ENCODE measurements at regions of chr12 and their contacts with region 1.

Region 1: GRCh38 chr12:27014085-27014858 is at the start of gene TM7SF3:
- DNase-seq: peak; percentile 97 to 98 (median 98)
- ATAC-seq: peak; percentile 87 to 96 (median 92)
- H3K4me3 ChIP-seq: peak within 1 kb of the TSS; percentile 71 to 81 (median 74)
- H3K27ac ChIP-seq: peak within 1 kb of the TSS; percentile 91 to 94 (median 93)
- H3K4me1 ChIP-seq: peaks cover 0 to 29% (median 9%) of the 10 kb centered on the region in 4 donors
- H3K27me3 ChIP-seq: no peaks in the 10 kb centered on the region
- CTCF ChIP-seq: peak; percentile 96 to 100 (median 98)
- POLR2A ChIP-seq: peak; percentile 83
- total RNA-seq, gene TM7SF3: 38.4 to 75.1 (median 62.8) TPM

Region 2: GRCh38 chr12:26810330-26810729 is 203.9 kb before region 1 on chr12:
- intact Hi-C with region 1: no loop called
- DNase-seq: peak in 1 of 3 donors; percentile 28
- ATAC-seq: peak; percentile 59 to 65 (median 62)
- H3K4me3 ChIP-seq: no peak overlapping the region
- H3K27ac ChIP-seq: no peak overlapping the region
- H3K4me1 ChIP-seq: peaks cover 0 to 18% (median under 1%) of the 10 kb centered on the region in 4 donors
- H3K27me3 ChIP-seq: no peaks in the 10 kb centered on the region
- CTCF ChIP-seq: no peak
- POLR2A ChIP-seq: no peak

Region 3: DNA sequence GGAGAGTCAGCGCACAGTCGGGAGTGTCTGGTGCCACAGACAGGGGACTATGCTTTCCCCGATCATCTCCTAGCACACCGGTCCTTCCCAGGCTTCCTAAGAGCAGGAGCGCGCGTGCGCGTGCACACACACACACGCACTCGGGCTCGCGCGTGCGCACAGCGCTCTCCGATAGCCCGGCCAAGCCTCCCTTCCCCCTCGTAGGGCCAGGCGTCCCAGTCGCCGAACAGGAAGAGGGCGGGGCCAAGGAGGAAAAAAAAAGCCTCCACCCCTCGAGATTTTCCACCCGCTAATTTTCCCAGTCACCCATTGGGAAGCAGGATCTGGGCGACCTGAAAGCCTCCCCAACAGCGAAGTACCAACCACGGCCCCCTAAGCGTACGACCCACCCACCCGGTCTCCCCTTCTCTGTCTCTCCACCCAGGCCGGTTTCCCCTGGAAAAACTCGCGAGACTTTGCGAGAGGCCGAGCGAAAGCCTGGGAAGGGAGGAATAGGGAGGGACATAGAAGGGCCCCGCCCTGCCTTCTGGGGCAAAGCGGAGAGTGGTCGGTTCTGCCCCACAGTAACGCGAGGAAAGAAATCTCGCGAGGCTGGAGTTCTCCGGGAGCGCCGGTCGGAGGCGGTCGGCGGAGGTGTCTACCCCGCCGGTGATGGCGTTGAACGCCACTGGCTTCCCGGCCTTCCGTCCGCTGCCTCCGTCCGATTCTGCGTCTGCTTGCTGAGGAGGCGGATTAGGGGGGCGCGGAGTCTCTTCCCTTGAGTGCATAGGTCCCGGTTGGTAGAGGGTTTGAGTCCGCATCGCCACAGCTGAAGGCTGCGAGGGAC is 76.2 kb before region 1 on chr12 and contains the starts of genes FGFR1OP2 and INTS13:
- intact Hi-C with region 1: loop called in 1 of 2 experiments (anchors 10 kb)
- DNase-seq: peak; percentile 99
- ATAC-seq: peak; percentile 94 to 98 (median 95)
- H3K4me3 ChIP-seq: peak within 1 kb of the TSS; percentile 87 to 94 (median 90)
- H3K27ac ChIP-seq: peak within 1 kb of the TSS; percentile 92 to 96 (median 93)
- H3K4me1 ChIP-seq: peaks cover 0 to 39% (median 9%) of the 10 kb centered on the region in 4 donors
- H3K27me3 ChIP-seq: no peaks in the 10 kb centered on the region
- CTCF ChIP-seq: peak in 1 of 4 donors; percentile 5
- POLR2A ChIP-seq: peak; percentile 97
- total RNA-seq, gene FGFR1OP2: 13.3 to 29.6 (median 20.1) TPM
- total RNA-seq, gene INTS13: 6.2 to 17.2 (median 9.1) TPM

Region 4: GRCh38 chr12:27142101-27142721 is 127.9 kb after region 1 on chr12:
- intact Hi-C with region 1: no loop called
- DNase-seq: peak in 2 of 3 donors; percentile 27 to 67
- ATAC-seq: peak; percentile 97 to 99 (median 98)
- H3K4me3 ChIP-seq: no peak overlapping the region
- H3K27ac ChIP-seq: no peak overlapping the region
- H3K4me1 ChIP-seq: no peaks in the 10 kb centered on the region
- H3K27me3 ChIP-seq: no peaks in the 10 kb centered on the region
- CTCF ChIP-seq: peak; percentile 63 to 85 (median 79)
- POLR2A ChIP-seq: no peak

Region 5: DNA sequence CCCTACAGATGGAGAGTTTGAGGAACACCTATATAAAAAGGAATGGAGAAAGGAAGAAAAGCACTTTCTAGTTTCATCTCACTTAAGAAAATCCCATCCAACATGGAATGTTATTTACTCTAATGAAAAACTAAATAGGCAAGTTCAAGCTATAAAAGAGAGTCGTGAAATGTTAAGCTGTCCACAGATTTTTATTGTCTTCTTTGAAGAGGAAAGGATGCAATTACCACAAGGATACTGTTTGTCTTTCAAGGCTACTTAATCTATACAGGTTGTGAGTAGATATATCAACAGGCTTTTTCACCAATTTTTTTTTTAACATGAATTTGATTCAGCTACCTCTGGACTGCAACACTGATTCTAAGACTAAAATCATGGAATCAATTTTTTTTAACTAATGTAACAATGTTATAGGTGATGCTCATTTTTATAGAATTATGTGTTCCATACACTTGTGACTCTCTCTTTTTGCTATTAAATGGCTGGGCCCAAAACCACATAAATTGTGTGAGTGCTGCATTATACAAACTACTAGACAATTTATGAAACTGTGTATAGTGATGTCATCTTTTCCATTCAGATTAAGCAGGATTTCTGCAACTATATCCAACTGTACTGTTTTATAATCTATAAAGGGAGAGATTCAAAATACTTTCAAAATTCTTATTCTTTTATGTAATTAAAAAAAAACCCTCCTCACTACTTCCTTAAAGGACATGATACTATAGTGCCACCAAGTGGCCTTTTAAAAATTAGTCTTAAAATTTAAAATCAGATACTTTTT is 291.6 kb after region 1 on chr12:
- intact Hi-C with region 1: loop called in 1 of 2 experiments (anchors 5 kb)
- DNase-seq: no peak
- ATAC-seq: peak in 2 of 4 donors; percentile 43 to 44
- H3K4me3 ChIP-seq: no peak overlapping the region
- H3K27ac ChIP-seq: no peak overlapping the region
- H3K4me1 ChIP-seq: peaks cover 0 to 8% (median 2%) of the 10 kb centered on the region in 4 donors
- H3K27me3 ChIP-seq: no peaks in the 10 kb centered on the region
- CTCF ChIP-seq: peak; percentile 44 to 70 (median 64)
- POLR2A ChIP-seq: no peak